ENCODE measurements at regions of chr10 and their contacts with region 1.

Region 1: GRCh38 chr10:28293241-28294154 is 9.4 kb downstream of the MPP7 start:
- DNase-seq: no peak
- ATAC-seq: no peak
- H3K4me3 ChIP-seq: no peak overlapping the region
- H3K4me3 Mint-ChIP-seq: peak overlapping the region in 9 of 10 donors; percentile 36 to 76 (median 57)
- H3K27ac ChIP-seq: peak overlapping the region; percentile 42
- H3K27ac Mint-ChIP-seq: peak overlapping the region in 8 of 9 donors; percentile 79 to 97 (median 86)
- H3K4me1 ChIP-seq: peaks cover 0 to 47% of the 10 kb centered on the region in 2 donors
- H3K4me1 Mint-ChIP-seq: peaks cover 3 to 88% (median 77%) of the 10 kb centered on the region in 7 donors
- H3K27me3 ChIP-seq: no peaks in the 10 kb centered on the region
- H3K27me3 Mint-ChIP-seq: no peaks in the 10 kb centered on the region

Region 2: GRCh38 chr10:28160866-28161405 is 132.6 kb before region 1 on chr10:
- CTCF ChIA-PET with region 1: no interaction called
- POLR2A ChIA-PET with region 1: no interaction called
- intact Hi-C with region 1: no loop called
- DNase-seq: no peak
- ATAC-seq: no peak
- H3K4me3 ChIP-seq: no peak overlapping the region
- H3K4me3 Mint-ChIP-seq: no peak overlapping the region
- H3K27ac ChIP-seq: no peak overlapping the region
- H3K27ac Mint-ChIP-seq: no peak overlapping the region
- H3K4me1 ChIP-seq: no peaks in the 10 kb centered on the region
- H3K4me1 Mint-ChIP-seq: peaks cover 0 to 64% (median 40%) of the 10 kb centered on the region in 7 donors
- H3K27me3 ChIP-seq: no peaks in the 10 kb centered on the region
- H3K27me3 Mint-ChIP-seq: no peaks in the 10 kb centered on the region

Region 3: GRCh38 chr10:28273343-28273742 is 20.2 kb before region 1 on chr10:
- CTCF ChIA-PET with region 1: no interaction called
- POLR2A ChIA-PET with region 1: interaction called, 3 read pairs
- intact Hi-C with region 1: loop called in 1 of 2 experiments (anchors 2 kb)
- DNase-seq: no peak
- ATAC-seq: no peak
- H3K4me3 ChIP-seq: no peak overlapping the region
- H3K4me3 Mint-ChIP-seq: peak overlapping the region in 2 of 10 donors; percentile 4 to 23
- H3K27ac ChIP-seq: no peak overlapping the region
- H3K27ac Mint-ChIP-seq: peak overlapping the region in 1 of 9 donors; percentile 26
- H3K4me1 ChIP-seq: peaks cover 0 to 8% of the 10 kb centered on the region in 2 donors
- H3K4me1 Mint-ChIP-seq: peaks cover 0 to 71% (median 55%) of the 10 kb centered on the region in 7 donors
- H3K27me3 ChIP-seq: no peaks in the 10 kb centered on the region
- H3K27me3 Mint-ChIP-seq: no peaks in the 10 kb centered on the region

Measured in naive thymus-derived CD4-positive, alpha-beta T cell (primary cell).